ENCODE measurements at regions of chr15 and their contacts with region 1.

Region 1: GRCh38 chr15:89416141-89416853 is 80.1 kb downstream of the RHCG start:
- DNase-seq: peak; percentile 85 to 89
- H3K4me3 ChIP-seq: no peak overlapping the region
- H3K4me3 Mint-ChIP-seq: no peak overlapping the region
- H3K27ac Mint-ChIP-seq: no peak overlapping the region
- H3K4me1 ChIP-seq: no peaks in the 10 kb centered on the region
- H3K4me1 Mint-ChIP-seq: no peaks in the 10 kb centered on the region
- H3K27me3 ChIP-seq: peaks cover 3% of the 10 kb centered on the region
- H3K27me3 Mint-ChIP-seq: peaks cover 22% of the 10 kb centered on the region
- CTCF ChIP-seq: peak; percentile 86 to 94

Region 2: DNA sequence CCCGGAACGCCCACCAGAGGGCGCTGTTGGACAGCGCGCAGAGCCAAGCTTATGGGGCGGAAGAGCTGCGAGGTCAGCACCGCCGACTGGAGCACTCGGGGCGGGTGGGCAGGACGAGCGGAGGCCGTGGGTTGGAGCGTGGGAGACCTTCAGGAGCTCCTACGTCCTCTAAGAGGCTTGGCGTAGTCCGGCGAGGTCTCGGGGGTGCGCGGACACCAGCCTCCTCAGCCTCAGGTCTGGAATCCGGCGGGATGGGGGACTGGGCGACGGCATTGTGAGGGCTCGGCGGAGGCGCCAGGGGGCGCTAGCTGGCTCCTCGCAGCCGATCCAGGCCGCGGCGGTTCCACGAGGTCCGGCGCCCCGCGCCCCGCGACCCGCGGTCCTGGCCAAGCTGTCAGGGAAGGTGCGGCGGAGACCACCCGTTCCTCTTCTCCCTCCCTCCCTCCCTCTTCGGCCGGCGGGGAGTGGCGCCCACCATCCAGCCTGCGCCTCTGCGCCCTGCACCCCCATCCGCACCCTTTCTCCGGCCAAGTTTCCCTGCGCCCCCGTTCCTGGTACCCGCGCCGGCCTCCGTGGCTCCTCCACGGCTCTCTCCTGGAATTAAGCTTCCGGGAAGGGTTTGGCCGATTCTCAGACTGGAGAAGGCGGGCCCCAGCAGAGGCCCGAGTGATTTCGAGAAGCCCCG is 57.4 kb before region 1 on chr15:
- CTCF ChIA-PET with region 1: interaction called, 8 read pairs
- POLR2A ChIA-PET with region 1: no interaction called
- intact Hi-C with region 1: loop called (anchors 1 kb)
- DNase-seq: peak; percentile 55 to 83
- H3K4me3 ChIP-seq: peak overlapping the region; percentile 65
- H3K4me3 Mint-ChIP-seq: peak overlapping the region; percentile 78
- H3K27ac Mint-ChIP-seq: no peak overlapping the region
- H3K4me1 ChIP-seq: no peaks in the 10 kb centered on the region
- H3K4me1 Mint-ChIP-seq: no peaks in the 10 kb centered on the region
- H3K27me3 ChIP-seq: peaks cover 6% of the 10 kb centered on the region
- H3K27me3 Mint-ChIP-seq: peaks cover 42% of the 10 kb centered on the region
- CTCF ChIP-seq: peak; percentile 57 to 97

Region 3: GRCh38 chr15:89430530-89431341 is 14.4 kb after region 1 on chr15:
- CTCF ChIA-PET with region 1: interaction called, 13 read pairs
- POLR2A ChIA-PET with region 1: no interaction called
- intact Hi-C with region 1: loop called (anchors 1 kb)
- DNase-seq: peak; percentile 81 to 91
- H3K4me3 ChIP-seq: peak overlapping the region; percentile 73
- H3K4me3 Mint-ChIP-seq: peak overlapping the region; percentile 80
- H3K27ac Mint-ChIP-seq: peak overlapping the region; percentile 78
- H3K4me1 ChIP-seq: no peaks in the 10 kb centered on the region
- H3K4me1 Mint-ChIP-seq: peaks cover 7% of the 10 kb centered on the region
- H3K27me3 ChIP-seq: no peaks in the 10 kb centered on the region
- H3K27me3 Mint-ChIP-seq: no peaks in the 10 kb centered on the region
- CTCF ChIP-seq: peak; percentile 88 to 94

Region 4: DNA sequence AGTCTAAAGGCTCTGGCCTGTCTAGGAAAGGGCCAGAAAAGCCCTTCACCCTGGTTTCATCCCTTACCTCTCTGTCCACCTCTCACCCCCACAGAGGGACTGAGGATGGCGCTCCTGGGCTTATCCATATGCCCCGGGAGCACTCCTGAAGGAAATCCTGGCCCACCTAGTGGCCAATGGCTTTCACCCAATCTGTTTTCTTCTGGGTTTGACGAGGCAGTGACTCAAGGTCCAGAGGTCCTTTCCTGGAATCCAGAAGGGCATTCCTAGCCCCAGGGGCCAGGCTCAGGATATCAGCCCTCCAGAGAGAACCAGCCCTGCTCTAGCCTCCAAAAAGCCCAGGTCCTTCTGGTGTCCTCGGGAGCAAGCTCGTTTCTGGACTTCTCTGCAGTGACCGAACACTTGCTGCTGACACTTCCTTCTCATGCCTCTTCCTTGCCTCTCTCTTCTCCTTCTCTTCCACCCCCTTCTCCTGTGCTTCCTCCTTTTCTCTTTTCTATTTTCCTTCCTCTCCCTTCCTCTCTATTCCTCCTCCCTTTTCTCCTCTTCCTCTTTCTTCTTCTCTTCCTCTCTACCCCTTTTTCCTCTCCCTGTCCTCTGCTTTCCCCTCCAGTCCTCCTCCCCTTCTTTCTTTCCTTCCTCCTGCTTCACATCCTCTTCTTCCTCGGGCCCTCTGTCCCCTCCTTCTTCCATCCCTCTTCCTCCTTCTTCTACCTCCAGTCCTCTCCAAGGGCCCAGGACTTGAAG is 20.4 kb after region 1 on chr15:
- CTCF ChIA-PET with region 1: interaction called, 4 read pairs
- POLR2A ChIA-PET with region 1: no interaction called
- intact Hi-C with region 1: loop called (anchors 1 kb)
- DNase-seq: peak; percentile 78 to 84
- H3K4me3 ChIP-seq: no peak overlapping the region
- H3K4me3 Mint-ChIP-seq: no peak overlapping the region
- H3K27ac Mint-ChIP-seq: peak overlapping the region; percentile 4
- H3K4me1 ChIP-seq: peaks cover 17% of the 10 kb centered on the region
- H3K4me1 Mint-ChIP-seq: peaks cover 14% of the 10 kb centered on the region
- H3K27me3 ChIP-seq: no peaks in the 10 kb centered on the region
- H3K27me3 Mint-ChIP-seq: no peaks in the 10 kb centered on the region
- CTCF ChIP-seq: peak; percentile 30 to 32

Region 5: DNA sequence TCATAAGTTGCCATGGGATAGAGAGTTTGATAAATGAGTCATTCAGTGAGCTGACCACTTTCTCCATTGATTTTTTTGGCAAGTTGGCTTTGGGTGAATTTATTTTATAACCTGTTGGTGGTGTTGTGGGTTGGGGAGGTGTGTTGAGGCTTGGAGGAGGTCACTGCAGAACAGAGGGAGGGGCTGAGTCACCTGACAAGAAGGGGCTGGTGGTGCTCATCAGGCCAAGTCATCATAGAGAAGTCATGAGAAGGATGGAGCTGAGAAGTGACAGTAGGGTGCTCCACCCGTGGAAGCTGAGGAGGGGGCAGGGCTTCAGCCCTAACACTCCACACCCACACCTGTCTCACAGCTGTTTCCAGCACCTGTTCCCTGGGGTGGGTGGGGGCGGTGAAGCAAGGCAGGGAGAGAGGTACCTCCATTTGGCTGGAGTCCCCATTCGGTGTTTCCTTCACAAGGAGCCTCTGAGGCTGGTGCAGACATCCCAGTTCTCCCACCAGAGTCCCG is 69.6 kb after region 1 on chr15:
- CTCF ChIA-PET with region 1: no interaction called
- POLR2A ChIA-PET with region 1: no interaction called
- intact Hi-C with region 1: no loop called
- DNase-seq: no peak
- H3K4me3 ChIP-seq: no peak overlapping the region
- H3K4me3 Mint-ChIP-seq: peak overlapping the region; percentile 7
- H3K27ac Mint-ChIP-seq: no peak overlapping the region
- H3K4me1 ChIP-seq: no peaks in the 10 kb centered on the region
- H3K4me1 Mint-ChIP-seq: no peaks in the 10 kb centered on the region
- H3K27me3 ChIP-seq: 0 out of 2 replicates have a peak, but pooled peaks cover 1% of the 10 kb centered on the region
- H3K27me3 Mint-ChIP-seq: peaks cover 15% of the 10 kb centered on the region
- CTCF ChIP-seq: no peak

Region 6: DNA sequence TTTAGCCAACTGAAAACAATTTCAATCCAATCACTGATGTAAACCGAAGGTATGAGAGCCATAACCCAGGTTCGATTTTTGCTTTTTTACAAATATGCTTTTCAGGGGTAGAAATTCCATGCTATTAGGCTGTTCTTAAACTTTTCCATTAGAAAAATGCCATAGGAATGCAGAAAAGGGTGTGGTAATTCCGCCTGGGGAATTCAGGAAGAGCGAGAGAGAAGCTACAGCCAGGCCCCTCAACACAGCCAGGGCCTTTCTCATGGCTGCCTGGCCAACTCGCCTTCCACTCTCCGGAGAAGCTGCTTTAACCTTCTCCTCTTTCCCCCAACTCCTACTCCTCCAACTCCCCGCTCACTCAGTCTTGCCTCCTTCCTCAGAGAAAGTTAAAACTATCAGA is 149.8 kb after region 1 on chr15:
- CTCF ChIA-PET with region 1: no interaction called
- POLR2A ChIA-PET with region 1: no interaction called
- intact Hi-C with region 1: no loop called
- DNase-seq: peak in 1 of 2 experiments; percentile 6
- H3K4me3 ChIP-seq: no peak overlapping the region
- H3K4me3 Mint-ChIP-seq: no peak overlapping the region
- H3K27ac Mint-ChIP-seq: peak overlapping the region; percentile 27
- H3K4me1 ChIP-seq: peaks cover 8% of the 10 kb centered on the region; the same call in 1 of the 2 replicates
- H3K4me1 Mint-ChIP-seq: peaks cover 10% of the 10 kb centered on the region
- H3K27me3 ChIP-seq: no peaks in the 10 kb centered on the region
- H3K27me3 Mint-ChIP-seq: no peaks in the 10 kb centered on the region
- CTCF ChIP-seq: no peak

Region 7: DNA sequence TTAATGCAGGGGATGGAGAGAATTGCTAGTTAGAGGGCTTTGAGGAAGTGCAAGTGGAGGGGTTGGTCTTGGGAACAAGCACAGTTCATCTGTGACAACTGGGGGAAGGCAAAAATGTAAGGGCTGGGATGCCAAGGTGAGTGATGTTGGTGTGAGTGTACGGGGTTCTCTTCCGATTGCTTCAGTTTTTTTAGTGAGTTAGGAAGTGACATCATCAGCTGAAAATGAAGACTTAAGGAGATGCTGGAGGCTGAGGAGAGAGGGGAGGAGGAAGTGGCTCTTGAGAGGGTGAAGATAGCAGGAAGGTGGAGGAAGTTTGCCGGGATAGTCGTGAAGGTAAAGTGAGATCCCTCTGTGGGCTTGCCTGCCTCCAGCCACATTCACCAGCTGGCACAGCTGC is 171.7 kb after region 1 on chr15:
- CTCF ChIA-PET with region 1: no interaction called
- POLR2A ChIA-PET with region 1: no interaction called
- intact Hi-C with region 1: no loop called
- DNase-seq: no peak
- H3K4me3 ChIP-seq: no peak overlapping the region
- H3K4me3 Mint-ChIP-seq: no peak overlapping the region
- H3K27ac Mint-ChIP-seq: no peak overlapping the region
- H3K4me1 ChIP-seq: no peaks in the 10 kb centered on the region
- H3K4me1 Mint-ChIP-seq: no peaks in the 10 kb centered on the region
- H3K27me3 ChIP-seq: no peaks in the 10 kb centered on the region
- H3K27me3 Mint-ChIP-seq: no peaks in the 10 kb centered on the region
- CTCF ChIP-seq: no peak

Measured in Caco-2 (cell line).